CD8-positive, alpha-beta T cell (primary cell): ENCODE measurements at regions of chr10 and their contacts with region 1.

Region 1: DNA sequence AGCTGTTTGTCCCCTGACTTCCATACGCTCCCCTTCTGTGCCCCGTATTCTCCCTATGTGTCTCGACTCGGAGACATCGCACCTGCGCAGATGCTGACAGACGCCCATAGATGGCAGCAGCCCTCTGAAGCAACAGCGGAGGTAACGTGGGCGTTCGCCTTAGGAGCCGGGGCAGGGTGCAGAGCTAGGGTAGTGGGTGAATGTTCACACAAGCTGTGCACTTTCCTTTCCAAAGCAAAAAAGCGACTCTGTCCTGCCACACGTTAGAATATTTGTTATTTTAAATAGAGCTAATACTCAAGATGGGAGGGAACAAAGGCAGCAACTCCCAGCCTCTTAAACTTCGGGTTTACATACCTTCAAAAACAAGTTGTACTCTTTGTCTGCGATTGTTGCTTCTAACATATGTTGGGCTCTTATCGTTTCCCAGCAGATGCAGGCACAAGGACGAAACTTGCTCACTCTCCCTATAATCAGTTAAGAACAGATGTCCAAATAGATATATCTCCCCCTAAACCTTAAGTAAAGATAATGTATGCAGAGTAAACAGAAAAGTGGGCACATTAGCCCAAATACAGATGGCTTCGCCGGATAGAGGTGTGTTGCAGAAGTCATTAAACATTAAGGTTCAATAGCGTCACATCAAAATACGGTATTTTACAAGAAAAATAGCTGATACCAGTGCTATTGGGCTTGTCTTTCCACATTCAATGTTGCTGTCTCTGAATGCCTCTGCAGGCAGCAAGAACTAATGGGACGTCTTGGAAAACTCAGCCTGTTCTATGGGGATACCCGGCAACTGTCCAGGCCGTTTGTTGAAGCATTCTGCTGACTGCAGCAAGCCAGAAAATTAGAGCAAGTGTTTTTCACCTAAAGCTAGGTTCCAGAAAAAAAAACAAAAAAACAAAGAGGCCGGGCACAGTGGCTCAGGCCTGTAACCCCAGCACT is 340.3 kb upstream of the PRKCQ start:
- DNase-seq: peak; percentile 50 to 88 (median 78)
- ATAC-seq: peak; percentile 99
- H3K4me3 ChIP-seq: no peak overlapping the region
- H3K4me3 Mint-ChIP-seq: no peak overlapping the region
- H3K27ac ChIP-seq: no peak overlapping the region
- H3K27ac Mint-ChIP-seq: no peak overlapping the region
- H3K4me1 ChIP-seq: peaks cover 8% of the 10 kb centered on the region
- H3K4me1 Mint-ChIP-seq: peaks cover 20% of the 10 kb centered on the region
- H3K27me3 ChIP-seq: peaks cover 0 to 2% of the 10 kb centered on the region in 2 experiments
- H3K27me3 Mint-ChIP-seq: peaks cover 6% of the 10 kb centered on the region
- CTCF ChIP-seq: peak; percentile 84

Region 2: DNA sequence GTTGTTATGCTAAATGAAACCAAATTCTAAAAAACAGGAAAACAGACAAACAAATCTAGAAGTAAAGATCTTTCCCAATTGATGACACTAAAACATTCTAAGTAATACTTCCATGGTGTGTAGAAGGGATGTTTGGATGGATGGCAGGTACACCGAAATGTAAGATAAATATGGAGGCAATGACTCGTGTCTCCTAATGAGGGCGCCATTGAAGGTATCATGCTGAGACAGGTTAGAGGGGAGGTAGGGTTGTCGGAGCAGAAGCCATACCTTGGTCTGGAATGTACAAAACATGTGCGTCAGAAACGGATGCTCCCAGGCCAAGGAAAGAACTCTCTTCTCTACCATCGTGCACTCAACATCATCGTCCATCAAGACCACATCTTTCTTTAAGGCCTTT is 441.6 kb before region 1 on chr10:
- CTCF ChIA-PET with region 1: no interaction called
- POLR2A ChIA-PET with region 1: no interaction called
- intact Hi-C with region 1: no loop called
- DNase-seq: peak in 2 of 9 experiments; percentile 34 to 48
- ATAC-seq: no peak
- H3K4me3 ChIP-seq: no peak overlapping the region
- H3K4me3 Mint-ChIP-seq: no peak overlapping the region
- H3K27ac ChIP-seq: no peak overlapping the region
- H3K27ac Mint-ChIP-seq: no peak overlapping the region
- H3K4me1 ChIP-seq: peaks cover 29% of the 10 kb centered on the region
- H3K4me1 Mint-ChIP-seq: peaks cover 47% of the 10 kb centered on the region
- H3K27me3 ChIP-seq: no peaks in the 10 kb centered on the region
- H3K27me3 Mint-ChIP-seq: no peaks in the 10 kb centered on the region
- CTCF ChIP-seq: no peak

Region 3: DNA sequence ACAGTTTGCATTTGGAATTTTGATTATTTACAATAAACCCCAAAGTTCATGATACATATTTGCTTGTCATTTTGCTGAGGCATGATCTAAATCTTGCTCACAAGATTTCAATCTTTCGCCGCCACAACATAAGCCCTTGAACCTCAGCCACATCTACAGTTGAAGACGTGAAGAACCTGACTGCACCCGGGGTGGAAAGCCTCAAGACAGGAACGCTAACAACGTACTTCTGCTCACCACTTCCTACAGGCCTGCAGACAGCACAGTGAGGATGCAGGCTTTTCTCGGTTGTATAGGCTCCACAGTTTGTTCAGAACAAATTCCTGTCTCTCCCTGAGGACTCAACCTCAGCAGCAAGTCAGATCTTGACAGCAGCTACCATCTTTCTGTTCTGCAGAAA is 53.6 kb after region 1 on chr10:
- CTCF ChIA-PET with region 1: interaction called, 6 read pairs
- POLR2A ChIA-PET with region 1: no interaction called
- intact Hi-C with region 1: loop called (anchors 5 kb)
- DNase-seq: peak in 6 of 9 experiments; percentile 16 to 67 (median 49)
- ATAC-seq: peak; percentile 92
- H3K4me3 ChIP-seq: no peak overlapping the region
- H3K4me3 Mint-ChIP-seq: no peak overlapping the region
- H3K27ac ChIP-seq: peak overlapping the region in 1 of 2 experiments; percentile 38
- H3K27ac Mint-ChIP-seq: no peak overlapping the region
- H3K4me1 ChIP-seq: no peaks in the 10 kb centered on the region
- H3K4me1 Mint-ChIP-seq: peaks cover 13% of the 10 kb centered on the region
- H3K27me3 ChIP-seq: no peaks in the 10 kb centered on the region
- H3K27me3 Mint-ChIP-seq: no peaks in the 10 kb centered on the region
- CTCF ChIP-seq: no peak

Region 4: DNA sequence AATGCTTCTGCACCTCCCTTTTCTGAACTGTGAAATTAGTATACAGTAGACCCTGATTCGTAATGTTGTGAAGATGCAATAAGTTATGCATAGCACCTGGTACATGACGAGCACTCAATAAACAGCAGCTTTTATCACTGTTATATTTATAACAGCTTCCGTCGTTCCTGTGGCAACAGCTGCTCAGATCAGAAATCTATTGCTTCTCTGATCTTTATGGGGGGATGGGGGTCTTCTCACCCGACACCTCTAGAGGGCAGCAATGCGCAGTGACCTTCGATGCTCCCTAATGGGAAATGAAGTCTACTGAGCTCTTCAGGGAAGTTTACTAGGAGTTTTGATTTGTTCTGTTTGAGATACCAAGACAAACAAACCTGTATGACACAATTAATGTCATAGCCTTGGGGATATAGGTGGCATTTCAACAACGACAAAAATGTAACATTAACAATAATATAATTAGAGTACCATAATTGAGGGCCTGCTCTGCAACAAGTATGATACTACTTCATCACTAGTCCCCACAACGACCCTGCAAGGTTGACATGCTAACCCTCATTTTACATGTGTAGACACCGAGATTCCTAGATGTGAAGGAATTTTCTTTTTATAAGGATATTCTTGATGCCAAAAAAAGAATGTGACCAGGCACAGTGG is 200.9 kb after region 1 on chr10:
- CTCF ChIA-PET with region 1: interaction called, 21 read pairs
- POLR2A ChIA-PET with region 1: interaction called, 3 read pairs
- intact Hi-C with region 1: loop called (anchors 1 to 5 kb)
- DNase-seq: peak; percentile 57 to 91 (median 78)
- ATAC-seq: peak; percentile 95
- H3K4me3 ChIP-seq: no peak overlapping the region
- H3K4me3 Mint-ChIP-seq: no peak overlapping the region
- H3K27ac ChIP-seq: no peak overlapping the region
- H3K27ac Mint-ChIP-seq: peak overlapping the region; percentile 69
- H3K4me1 ChIP-seq: peaks cover 4% of the 10 kb centered on the region
- H3K4me1 Mint-ChIP-seq: peaks cover 6% of the 10 kb centered on the region
- H3K27me3 ChIP-seq: no peaks in the 10 kb centered on the region
- H3K27me3 Mint-ChIP-seq: no peaks in the 10 kb centered on the region
- CTCF ChIP-seq: peak; percentile 61

Region 5: GRCh38 chr10:7410862-7411670 is 490.7 kb after region 1 on chr10 and contains the start of gene SFMBT2:
- CTCF ChIA-PET with region 1: interaction called, 136 read pairs
- POLR2A ChIA-PET with region 1: interaction called, 5 read pairs
- intact Hi-C with region 1: loop called in 1 of 2 experiments (anchors 2 kb)
- DNase-seq: peak in 7 of 9 experiments; percentile 48 to 87 (median 67)
- ATAC-seq: peak; percentile 51
- H3K4me3 ChIP-seq: peak within 1 kb of the TSS; percentile 93 to 96
- H3K4me3 Mint-ChIP-seq: peak within 1 kb of the TSS; percentile 98
- H3K27ac ChIP-seq: peak within 1 kb of the TSS; percentile 52 to 81
- H3K27ac Mint-ChIP-seq: peak within 1 kb of the TSS; percentile 96
- H3K4me1 ChIP-seq: peaks cover 40% of the 10 kb centered on the region
- H3K4me1 Mint-ChIP-seq: peaks cover 44% of the 10 kb centered on the region
- H3K27me3 ChIP-seq: peaks cover 0 to 10% of the 10 kb centered on the region in 2 experiments
- H3K27me3 Mint-ChIP-seq: no peaks in the 10 kb centered on the region
- CTCF ChIP-seq: no peak
- total RNA-seq, gene SFMBT2: 27.5 to 30.3 TPM

Region 6: DNA sequence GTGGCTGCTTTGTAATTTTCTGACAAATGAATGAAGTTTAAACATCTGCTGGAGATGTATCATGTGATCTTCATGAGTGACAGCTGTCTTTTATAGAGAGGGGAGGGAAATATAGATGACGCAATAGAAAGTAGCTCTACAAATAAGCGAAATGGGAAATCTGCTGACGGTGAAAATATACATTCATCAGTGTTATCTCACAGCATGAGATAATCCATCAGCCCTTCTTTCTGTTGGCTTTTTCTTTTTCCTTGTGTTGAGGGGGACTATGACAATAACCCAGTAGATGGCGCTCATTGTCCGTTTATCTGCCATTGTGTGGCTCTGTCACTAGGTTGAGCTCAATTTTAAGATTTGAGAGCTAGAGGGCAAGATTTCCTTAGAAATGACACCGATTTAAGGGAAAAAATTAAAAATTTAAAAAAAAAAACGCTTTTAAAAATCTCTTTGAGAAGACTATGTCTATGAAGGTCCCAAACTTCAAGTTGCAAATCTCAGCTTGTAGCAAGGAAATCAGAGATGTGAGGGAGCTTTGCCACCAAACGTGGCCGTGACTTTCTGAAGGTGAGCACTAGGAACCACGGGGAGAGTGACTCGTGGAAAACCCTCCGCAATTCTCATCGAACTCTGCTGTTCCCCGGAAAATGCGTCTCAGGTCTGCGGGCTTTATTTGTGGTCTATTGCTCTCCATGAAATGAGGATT is 605.1 kb after region 1 on chr10:
- CTCF ChIA-PET with region 1: interaction called, 7 read pairs
- POLR2A ChIA-PET with region 1: no interaction called
- intact Hi-C with region 1: loop called in 1 of 2 experiments (anchors 10 kb)
- DNase-seq: peak; percentile 27 to 85 (median 59)
- ATAC-seq: peak; percentile 80
- H3K4me3 ChIP-seq: no peak overlapping the region
- H3K4me3 Mint-ChIP-seq: no peak overlapping the region
- H3K27ac ChIP-seq: no peak overlapping the region
- H3K27ac Mint-ChIP-seq: no peak overlapping the region
- H3K4me1 ChIP-seq: peaks cover 7% of the 10 kb centered on the region
- H3K4me1 Mint-ChIP-seq: peaks cover 22% of the 10 kb centered on the region
- H3K27me3 ChIP-seq: no peaks in the 10 kb centered on the region
- H3K27me3 Mint-ChIP-seq: no peaks in the 10 kb centered on the region
- CTCF ChIP-seq: peak; percentile 85